GM10248 (cell line): ENCODE measurements at regions of chr7 and their contacts with region 1.

Region 1: DNA sequence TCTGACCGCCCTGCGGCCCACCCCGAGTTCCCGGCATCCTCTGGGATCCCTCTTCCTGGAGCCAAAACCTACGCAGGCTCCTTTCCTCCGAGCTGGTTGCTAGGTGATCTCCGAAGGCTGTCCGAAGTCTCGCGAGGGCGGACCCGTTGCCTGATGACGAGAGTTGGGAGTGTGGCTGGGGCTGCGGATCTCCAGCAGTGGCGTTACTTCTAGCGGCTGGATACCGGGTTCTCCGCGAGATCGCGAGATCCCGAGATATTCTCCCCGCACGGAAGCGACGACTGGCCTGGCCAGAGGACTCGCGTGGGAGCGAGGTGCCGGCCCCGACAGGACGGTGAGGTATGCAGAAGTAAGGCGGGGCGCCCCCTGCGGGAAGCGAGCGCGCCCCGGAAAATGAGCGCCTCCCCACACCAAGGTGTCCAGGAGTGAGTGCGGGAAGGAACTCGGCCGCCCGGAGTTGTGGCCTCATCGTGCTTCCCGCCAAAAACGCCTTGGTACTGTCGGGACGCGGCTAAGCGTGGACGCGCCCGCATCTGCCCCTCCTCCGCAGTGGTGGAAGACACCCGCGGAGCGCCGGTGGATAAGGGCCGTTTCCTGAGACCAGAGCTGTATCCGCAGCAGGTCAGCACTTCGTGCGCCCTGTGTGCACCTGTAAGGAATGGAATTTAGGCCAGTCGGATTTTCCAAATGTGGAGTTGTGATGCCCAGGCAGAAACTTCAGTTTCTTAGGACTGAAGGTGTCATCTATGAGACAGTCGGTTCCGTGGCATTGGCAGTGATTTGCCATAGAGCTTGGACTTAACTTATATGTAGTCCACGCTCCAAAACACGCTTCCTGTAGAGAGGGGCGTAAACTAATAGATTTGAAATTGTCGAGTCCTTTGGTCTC is at the start of gene AGBL3:
- DNase-seq: peak; percentile 88
- CTCF ChIP-seq: peak; percentile 66

Region 2: GRCh38 chr7:134966681-134967080 is 19.9 kb before region 1 on chr7:
- CTCF ChIA-PET with region 1: interaction called, 20 read pairs
- POLR2A ChIA-PET with region 1: no interaction called
- DNase-seq: no peak
- CTCF ChIP-seq: no peak

Region 3: DNA sequence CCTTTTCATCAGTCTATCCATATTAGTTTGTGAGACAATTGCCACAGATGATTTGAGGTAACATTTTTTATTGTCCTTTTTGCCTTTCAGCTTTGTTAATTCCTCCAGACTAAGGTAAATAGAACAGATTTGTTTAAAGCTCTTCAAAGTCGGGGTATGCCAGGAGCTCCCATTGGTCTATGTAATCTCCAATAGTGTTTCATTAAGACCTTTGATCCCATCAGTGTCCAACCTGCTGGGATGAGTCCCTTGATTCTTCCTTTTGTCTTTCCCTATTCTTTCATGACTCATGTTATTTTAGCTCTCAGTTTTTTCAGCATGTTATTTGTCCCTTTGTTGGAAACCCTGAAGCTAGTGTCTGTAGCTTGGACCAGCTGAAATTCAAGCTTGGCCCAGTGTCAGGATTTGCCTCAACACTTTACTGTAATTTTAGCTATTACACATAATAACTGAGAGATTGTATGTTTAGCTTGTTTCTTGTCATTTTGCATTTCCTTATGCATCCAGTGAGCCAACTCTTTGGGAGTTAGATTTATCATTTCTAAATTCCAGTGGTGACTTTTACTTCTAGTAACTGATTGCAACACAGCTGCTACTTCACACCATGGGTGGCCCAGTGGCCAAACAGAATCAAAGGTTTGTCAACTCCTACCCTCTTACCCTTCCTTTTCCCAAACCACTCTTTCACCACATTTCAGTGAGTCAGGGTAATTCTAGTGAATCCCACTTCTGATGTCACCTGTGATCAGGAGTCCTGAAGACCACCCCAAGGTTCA is 15.0 kb after region 1 on chr7:
- CTCF ChIA-PET with region 1: interaction called, 28 read pairs
- POLR2A ChIA-PET with region 1: no interaction called
- DNase-seq: no peak
- CTCF ChIP-seq: no peak

Region 4: DNA sequence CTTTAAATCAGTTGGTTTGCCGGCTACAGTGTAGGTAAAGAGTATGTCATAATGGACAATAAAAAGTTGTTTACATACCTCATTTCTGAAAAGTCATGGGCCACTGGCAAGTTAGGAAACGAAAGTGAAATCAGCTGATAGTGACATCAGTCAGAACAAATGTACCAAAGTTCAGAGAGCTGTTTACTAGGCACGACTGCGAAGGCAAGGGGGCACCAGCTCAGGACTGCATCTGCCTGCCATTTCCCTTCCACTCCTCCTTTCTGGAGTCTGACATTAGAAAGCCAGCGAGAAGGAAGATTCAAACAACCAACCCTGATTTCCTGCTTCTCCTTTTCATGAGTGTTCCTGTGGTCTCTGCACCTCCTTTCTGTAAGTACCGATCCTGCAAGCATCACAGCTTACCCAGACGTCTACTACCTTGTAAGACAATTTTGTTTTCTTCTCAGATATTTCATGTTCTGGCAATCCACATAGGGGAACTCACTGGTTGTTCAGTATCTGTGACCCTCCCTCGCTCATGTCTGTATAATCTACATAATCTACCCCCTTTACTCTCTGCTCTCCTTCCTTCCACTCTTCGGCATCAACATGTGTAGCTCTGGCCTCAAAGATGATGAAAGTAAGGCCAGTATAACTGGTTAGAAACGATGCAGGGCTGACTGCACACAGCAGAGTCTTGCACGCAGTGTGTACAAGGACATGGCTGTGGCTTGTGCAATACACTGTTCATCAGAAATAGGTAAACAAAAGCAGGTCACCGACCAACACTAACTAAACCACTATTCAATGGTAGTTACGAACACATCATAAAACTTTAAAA is 161.5 kb after region 1 on chr7 and contains the start of gene TMEM140:
- CTCF ChIA-PET with region 1: interaction called, 28 read pairs
- POLR2A ChIA-PET with region 1: no interaction called
- DNase-seq: peak; percentile 54
- CTCF ChIP-seq: no peak

Region 5: DNA sequence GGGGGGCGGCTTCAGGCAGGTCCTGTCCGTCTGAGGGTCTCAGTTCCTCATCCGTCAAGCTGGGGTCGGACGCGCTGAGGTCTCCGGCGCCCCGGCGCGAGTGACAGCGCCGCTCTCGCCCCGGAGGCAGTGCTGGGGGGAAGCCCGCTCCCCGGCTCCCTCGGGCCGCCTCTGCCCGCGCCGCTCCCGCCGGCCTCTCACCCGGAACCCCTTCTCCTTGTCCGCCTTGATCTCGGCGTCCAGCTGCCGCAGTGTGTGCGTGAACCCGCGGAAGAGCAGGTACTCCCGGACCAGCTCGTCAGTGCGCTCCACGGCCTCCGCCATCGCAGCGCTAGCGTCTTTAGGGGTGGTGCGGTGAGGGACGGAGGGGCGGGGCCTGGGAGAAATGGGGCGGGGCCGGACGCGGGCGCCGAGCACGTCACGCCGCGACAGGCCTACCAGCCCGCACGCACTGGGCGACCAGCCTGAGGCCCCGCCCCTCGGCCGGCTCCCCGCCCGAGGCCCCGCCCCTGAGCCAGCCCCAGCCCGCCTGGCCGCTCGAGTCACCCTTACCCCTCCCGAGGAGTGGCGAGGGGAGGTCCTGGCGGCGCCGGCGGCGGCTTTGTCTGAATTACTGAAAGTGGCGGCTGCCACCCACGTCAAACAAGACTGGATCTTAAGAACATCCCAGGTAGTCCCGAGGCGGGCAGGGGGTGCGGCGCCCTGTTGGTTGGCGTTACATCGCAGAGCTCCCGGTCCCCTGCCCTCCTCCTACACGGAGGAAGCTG is 224.8 kb after region 1 on chr7 and contains the start of gene WDR91:
- CTCF ChIA-PET with region 1: interaction called, 10 read pairs
- POLR2A ChIA-PET with region 1: interaction called, 4 read pairs
- DNase-seq: peak; percentile 100
- CTCF ChIP-seq: peak; percentile 1